Tibial artery (tissue), 4 donors: ENCODE measurements at regions of chr12 and their contacts with region 1.

Region 1: GRCh38 chr12:452667-453210 is 7.0 kb upstream of the B4GALNT3 start:
- DNase-seq: no peak
- H3K4me3 ChIP-seq: no peak overlapping the region
- H3K27ac ChIP-seq: no peak overlapping the region
- H3K4me1 ChIP-seq: peaks cover 0 to 4% (median 1%) of the 10 kb centered on the region in 4 donors
- H3K27me3 ChIP-seq: no peaks in the 10 kb centered on the region
- CTCF ChIP-seq: peak in 1 of 2 experiments; percentile 33

Region 2: GRCh38 chr12:503111-503761 is 50.5 kb after region 1 on chr12:
- intact Hi-C with region 1: loop called (anchors 5 kb)
- DNase-seq: no peak
- H3K4me3 ChIP-seq: no peak overlapping the region
- H3K27ac ChIP-seq: no peak overlapping the region
- H3K4me1 ChIP-seq: peaks cover 0 to 18% (median 4%) of the 10 kb centered on the region in 4 donors
- H3K27me3 ChIP-seq: no peaks in the 10 kb centered on the region
- CTCF ChIP-seq: no peak

Region 3: DNA sequence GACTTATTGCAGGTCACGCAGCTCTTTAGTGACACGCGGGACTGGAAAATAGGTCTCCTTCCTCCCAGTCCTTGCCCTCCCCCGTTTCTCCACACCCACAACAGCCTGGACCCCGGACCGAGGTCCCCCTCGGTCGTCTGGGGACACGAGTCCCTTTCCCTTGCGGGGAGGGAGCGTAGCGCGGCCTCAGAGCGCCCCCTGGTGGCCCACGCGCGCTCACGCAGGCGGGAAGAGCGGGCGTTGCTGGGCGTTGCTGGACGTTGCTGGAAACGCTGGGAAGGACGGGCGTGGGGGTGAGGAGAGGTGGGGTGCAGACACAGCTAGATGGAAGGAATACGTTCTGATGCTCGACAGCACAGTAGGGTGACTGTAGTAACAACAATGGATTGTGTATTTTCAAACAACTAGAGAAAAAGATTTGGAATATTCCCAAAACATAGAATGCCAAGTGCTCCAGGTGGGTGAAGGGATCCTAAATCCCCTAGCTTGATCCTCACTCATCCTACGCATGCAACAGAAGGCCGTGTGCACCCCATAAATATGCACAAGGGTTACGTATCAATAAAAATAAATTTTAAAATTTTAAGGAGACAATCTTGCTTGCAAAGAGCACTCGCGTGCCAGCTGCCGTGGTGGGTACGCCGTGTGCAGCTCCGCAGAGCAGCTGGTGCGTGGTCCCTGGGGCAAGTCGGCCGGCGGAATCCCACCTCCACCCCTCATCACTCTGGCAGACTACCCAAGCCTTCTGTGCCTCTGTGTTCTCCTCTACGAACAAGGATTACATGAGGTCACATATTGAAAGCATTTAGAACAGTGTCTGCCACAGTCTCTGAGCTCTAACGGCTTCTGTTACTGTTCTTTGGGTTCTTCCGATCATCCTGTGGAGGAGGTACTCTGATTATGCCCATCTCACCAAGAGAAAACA is 94.4 kb after region 1 on chr12:
- intact Hi-C with region 1: loop called (anchors 2 kb)
- DNase-seq: no peak
- H3K4me3 ChIP-seq: no peak overlapping the region
- H3K27ac ChIP-seq: no peak overlapping the region
- H3K4me1 ChIP-seq: peaks cover 0 to 11% (median 6%) of the 10 kb centered on the region in 4 donors
- H3K27me3 ChIP-seq: no peaks in the 10 kb centered on the region
- CTCF ChIP-seq: peak; percentile 99 to 100